Caco-2 (cell line): ENCODE measurements at regions of chr11 and their contacts with region 1.

Region 1: GRCh38 chr11:23988381-23989006 is 508.4 kb upstream of the LUZP2 start:
- DNase-seq: peak in 1 of 2 experiments; percentile 36
- H3K4me3 ChIP-seq: no peak overlapping the region
- H3K4me3 Mint-ChIP-seq: no peak overlapping the region
- H3K27ac Mint-ChIP-seq: peak overlapping the region; percentile 68
- H3K4me1 ChIP-seq: peaks cover 22% of the 10 kb centered on the region
- H3K4me1 Mint-ChIP-seq: peaks cover 29% of the 10 kb centered on the region
- H3K27me3 ChIP-seq: no peaks in the 10 kb centered on the region
- H3K27me3 Mint-ChIP-seq: no peaks in the 10 kb centered on the region
- CTCF ChIP-seq: no peak

Region 2: DNA sequence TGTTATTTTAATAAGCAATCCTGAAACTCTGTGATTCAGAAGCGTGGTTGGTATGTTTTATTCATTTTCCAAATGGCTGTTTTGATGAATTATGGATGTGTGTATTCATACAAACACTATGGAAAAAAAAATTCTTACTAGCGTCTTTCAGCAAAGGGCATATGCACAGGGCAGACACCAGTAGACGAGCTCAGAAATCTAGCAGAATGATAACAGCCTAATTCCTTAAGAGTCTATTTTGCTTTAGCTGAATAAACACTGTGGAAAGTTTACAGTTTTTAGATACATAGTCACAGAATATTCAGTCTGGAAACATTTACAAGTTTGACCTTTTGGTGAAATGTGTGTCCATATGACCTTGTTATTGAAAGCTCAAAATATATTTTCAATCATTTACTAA is 89.5 kb after region 1 on chr11:
- CTCF ChIA-PET with region 1: no interaction called
- POLR2A ChIA-PET with region 1: no interaction called
- intact Hi-C with region 1: loop called (anchors 1 kb)
- DNase-seq: no peak
- H3K4me3 ChIP-seq: no peak overlapping the region
- H3K4me3 Mint-ChIP-seq: no peak overlapping the region
- H3K27ac Mint-ChIP-seq: no peak overlapping the region
- H3K4me1 ChIP-seq: peaks cover 20% of the 10 kb centered on the region
- H3K4me1 Mint-ChIP-seq: peaks cover 12% of the 10 kb centered on the region
- H3K27me3 ChIP-seq: no peaks in the 10 kb centered on the region
- H3K27me3 Mint-ChIP-seq: no peaks in the 10 kb centered on the region
- CTCF ChIP-seq: no peak

Region 3: DNA sequence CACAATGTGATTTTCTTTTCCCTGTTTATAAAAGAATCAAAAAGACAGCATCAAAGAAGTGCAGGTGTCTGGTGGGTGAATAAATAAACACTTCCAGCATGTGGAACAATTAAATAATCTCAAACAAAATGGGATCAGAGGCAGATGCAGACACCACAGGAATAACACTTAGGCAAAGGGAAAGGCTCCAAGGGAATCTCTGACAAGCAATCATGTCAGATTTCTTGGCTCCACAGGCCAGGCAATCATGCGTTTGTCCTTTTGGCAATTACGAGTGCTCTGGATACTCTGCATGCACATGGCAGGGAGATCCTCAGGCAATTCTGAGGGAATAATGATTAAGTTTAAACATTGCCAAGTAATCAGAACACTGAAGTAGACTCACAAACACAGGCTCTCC is 104.9 kb after region 1 on chr11:
- CTCF ChIA-PET with region 1: no interaction called
- POLR2A ChIA-PET with region 1: no interaction called
- intact Hi-C with region 1: no loop called
- DNase-seq: no peak
- H3K4me3 ChIP-seq: no peak overlapping the region
- H3K4me3 Mint-ChIP-seq: no peak overlapping the region
- H3K27ac Mint-ChIP-seq: no peak overlapping the region
- H3K4me1 ChIP-seq: no peaks in the 10 kb centered on the region
- H3K4me1 Mint-ChIP-seq: no peaks in the 10 kb centered on the region
- H3K27me3 ChIP-seq: no peaks in the 10 kb centered on the region
- H3K27me3 Mint-ChIP-seq: no peaks in the 10 kb centered on the region
- CTCF ChIP-seq: no peak